H1 (cell line): ENCODE measurements at regions of chr1 and their contacts with region 1.

Region 1: GRCh38 chr1:54361342-54361741 is 44.9 kb downstream of the SSBP3 start:
- DNase-seq: no peak
- H3K4me3 ChIP-seq: no peak overlapping the region
- H3K27ac ChIP-seq: no peak overlapping the region
- H3K4me1 ChIP-seq: peaks cover 16 to 41% (median 26%) of the 10 kb centered on the region in 4 experiments
- H3K27me3 ChIP-seq: no peaks in the 10 kb centered on the region
- CTCF ChIP-seq: peak in 2 of 3 experiments; percentile 33 to 37; a peak in 3 of 4 replicates
- EP300 ChIP-seq: no peak
- POLR2A ChIP-seq: no peak
- RAD21 ChIP-seq: peak; percentile 45 to 62

Region 2: GRCh38 chr1:54323324-54323739 is 38.0 kb before region 1 on chr1:
- CTCF ChIA-PET with region 1: interaction called, 11 read pairs
- POLR2A ChIA-PET with region 1: no interaction called
- DNase-seq: no peak
- H3K4me3 ChIP-seq: no peak overlapping the region
- H3K27ac ChIP-seq: no peak overlapping the region
- H3K4me1 ChIP-seq: peaks cover 22 to 43% (median 34%) of the 10 kb centered on the region in 4 experiments
- H3K27me3 ChIP-seq: no peaks in the 10 kb centered on the region
- CTCF ChIP-seq: peak; percentile 36 to 51 (median 47)
- EP300 ChIP-seq: no peak
- POLR2A ChIP-seq: no peak
- RAD21 ChIP-seq: peak; percentile 58 to 73

Region 3: DNA sequence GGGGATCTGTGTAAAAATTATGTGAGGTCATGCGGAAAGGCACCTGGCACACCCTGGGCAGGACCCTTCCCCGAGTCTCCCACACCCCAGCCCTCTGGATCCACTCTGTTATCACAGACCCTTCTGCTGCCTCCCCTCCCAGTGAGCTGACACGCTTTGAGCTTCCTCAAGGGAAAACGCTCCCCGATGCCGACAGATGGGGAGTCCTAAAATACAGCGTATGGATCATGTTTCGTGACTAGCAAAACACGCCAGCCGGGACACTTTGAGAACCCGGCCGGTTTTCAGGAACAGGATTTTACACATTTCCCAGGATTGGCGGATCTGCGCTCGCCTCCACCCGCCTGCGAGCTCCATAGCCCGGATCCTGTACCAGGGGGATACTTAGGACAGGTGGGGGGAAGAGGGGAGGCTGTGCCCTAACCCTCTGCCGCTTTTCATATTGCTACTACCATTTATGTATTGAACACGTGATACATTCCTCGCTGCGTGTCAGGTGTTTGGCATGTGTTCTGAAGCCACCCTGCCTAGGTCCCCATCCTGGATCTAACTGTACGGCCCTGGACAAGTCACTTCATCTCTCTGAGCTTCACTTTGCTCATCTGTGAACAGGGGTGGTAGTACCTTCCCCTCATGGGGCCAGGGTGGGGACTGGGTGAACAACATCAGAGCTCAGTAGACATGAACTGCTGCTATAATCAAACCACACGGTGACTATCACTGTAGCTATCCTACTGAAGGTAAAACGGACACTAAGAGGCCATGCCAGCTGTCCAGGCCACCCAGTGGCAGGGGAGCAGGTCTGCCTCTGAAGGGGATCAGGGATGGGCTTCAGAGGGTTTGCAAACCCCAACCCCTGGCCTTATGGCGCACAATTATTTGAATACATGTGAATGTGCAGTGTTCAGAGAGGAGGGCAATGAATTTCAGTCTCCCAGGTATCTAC is 18.3 kb before region 1 on chr1:
- CTCF ChIA-PET with region 1: interaction called, 22 read pairs
- POLR2A ChIA-PET with region 1: interaction called, 6 read pairs
- DNase-seq: no peak
- H3K4me3 ChIP-seq: peak overlapping the region in 2 of 4 experiments; percentile 15 to 29; a peak in 2 of 8 replicates
- H3K27ac ChIP-seq: peak overlapping the region; percentile 33; the same call in 1 of the 2 replicates
- H3K4me1 ChIP-seq: peaks cover 21 to 29% (median 24%) of the 10 kb centered on the region in 4 experiments
- H3K27me3 ChIP-seq: no peaks in the 10 kb centered on the region
- CTCF ChIP-seq: peak; percentile 14 to 29 (median 18); a peak in 2 of 4 replicates
- EP300 ChIP-seq: no peak
- POLR2A ChIP-seq: no peak
- RAD21 ChIP-seq: no peak; a peak in 1 of 4 replicates

Region 4: GRCh38 chr1:54376430-54377039 is 15.2 kb after region 1 on chr1:
- CTCF ChIA-PET with region 1: interaction called, 9 read pairs
- POLR2A ChIA-PET with region 1: interaction called, 10 read pairs
- DNase-seq: no peak
- H3K4me3 ChIP-seq: peak overlapping the region in 2 of 4 experiments; percentile 2 to 7; a peak in 2 of 8 replicates
- H3K27ac ChIP-seq: peak overlapping the region; percentile 41; the same call in 1 of the 2 replicates
- H3K4me1 ChIP-seq: peaks cover 42 to 75% (median 59%) of the 10 kb centered on the region in 4 experiments
- H3K27me3 ChIP-seq: no peaks in the 10 kb centered on the region
- CTCF ChIP-seq: no peak
- EP300 ChIP-seq: no peak
- POLR2A ChIP-seq: no peak
- RAD21 ChIP-seq: no peak

Region 5: GRCh38 chr1:54474639-54475251 is 113.4 kb after region 1 on chr1:
- CTCF ChIA-PET with region 1: no interaction called
- POLR2A ChIA-PET with region 1: no interaction called
- DNase-seq: peak in 1 of 2 experiments; percentile 77
- H3K4me3 ChIP-seq: peak overlapping the region; percentile 38 to 55 (median 44)
- H3K27ac ChIP-seq: no peak overlapping the region; the same call in 1 of the 2 replicates
- H3K4me1 ChIP-seq: peaks cover 20 to 43% (median 30%) of the 10 kb centered on the region in 4 experiments
- H3K27me3 ChIP-seq: peaks cover 0 to 27% (median 12%) of the 10 kb centered on the region in 4 experiments; a peak in 5 of 7 replicates
- CTCF ChIP-seq: no peak
- EP300 ChIP-seq: no peak; a peak in 1 of 3 replicates
- POLR2A ChIP-seq: no peak
- RAD21 ChIP-seq: no peak; a peak in 1 of 4 replicates